ENCODE measurements at regions of chr14 and their contacts with region 1.

Region 1: DNA sequence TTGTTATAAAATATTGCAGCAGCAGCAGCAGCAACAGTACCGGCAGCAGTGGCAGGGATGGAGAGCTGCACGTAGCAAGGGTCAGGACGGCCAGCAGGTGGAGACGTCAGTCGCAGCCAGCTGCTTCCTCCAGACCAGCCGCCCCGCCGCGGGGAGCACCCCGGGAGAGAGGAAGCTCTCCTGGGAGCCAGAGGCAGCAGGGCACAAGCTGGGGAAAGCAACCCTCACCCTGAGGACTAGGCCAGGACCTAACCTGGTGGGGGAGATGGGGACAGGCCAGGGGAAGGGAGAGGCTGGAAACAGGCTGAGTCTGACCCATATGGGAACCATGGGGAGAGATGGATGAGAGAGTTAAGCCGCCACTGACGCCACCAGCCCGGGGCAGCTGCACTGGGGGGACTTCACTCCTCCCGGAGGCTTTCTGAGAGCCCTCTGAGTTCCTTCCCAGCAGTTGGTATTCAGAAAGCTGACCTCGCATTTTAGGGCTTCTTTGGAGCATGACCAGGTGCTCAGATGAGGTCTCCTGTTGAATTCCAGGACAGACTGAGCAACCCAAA is 56.3 kb downstream of the SPTB start:
- DNase-seq: peak; percentile 79 to 85
- H3K4me3 ChIP-seq: no peak overlapping the region
- H3K4me3 Mint-ChIP-seq: no peak overlapping the region
- H3K27ac Mint-ChIP-seq: no peak overlapping the region
- H3K4me1 ChIP-seq: no peaks in the 10 kb centered on the region
- H3K4me1 Mint-ChIP-seq: no peaks in the 10 kb centered on the region
- H3K27me3 ChIP-seq: no peaks in the 10 kb centered on the region
- H3K27me3 Mint-ChIP-seq: peaks cover 3% of the 10 kb centered on the region
- CTCF ChIP-seq: peak; percentile 72 to 90

Region 2: GRCh38 chr14:64745511-64746091 is 77.8 kb before region 1 on chr14:
- CTCF ChIA-PET with region 1: no interaction called
- POLR2A ChIA-PET with region 1: no interaction called
- intact Hi-C with region 1: no loop called
- DNase-seq: peak in 1 of 2 experiments; percentile 44
- H3K4me3 ChIP-seq: no peak overlapping the region
- H3K4me3 Mint-ChIP-seq: no peak overlapping the region
- H3K27ac Mint-ChIP-seq: peak overlapping the region; percentile 72
- H3K4me1 ChIP-seq: no peaks in the 10 kb centered on the region
- H3K4me1 Mint-ChIP-seq: no peaks in the 10 kb centered on the region
- H3K27me3 ChIP-seq: no peaks in the 10 kb centered on the region
- H3K27me3 Mint-ChIP-seq: no peaks in the 10 kb centered on the region
- CTCF ChIP-seq: peak in 1 of 2 experiments; percentile 39

Region 3: GRCh38 chr14:64841121-64841651 is 17.8 kb after region 1 on chr14:
- CTCF ChIA-PET with region 1: interaction called, 9 read pairs
- POLR2A ChIA-PET with region 1: no interaction called
- intact Hi-C with region 1: loop called (anchors 2 kb)
- DNase-seq: peak; percentile 73 to 77
- H3K4me3 ChIP-seq: no peak overlapping the region
- H3K4me3 Mint-ChIP-seq: no peak overlapping the region
- H3K27ac Mint-ChIP-seq: no peak overlapping the region
- H3K4me1 ChIP-seq: 0 out of 2 replicates have a peak, but pooled peaks cover 5% of the 10 kb centered on the region
- H3K4me1 Mint-ChIP-seq: peaks cover 7% of the 10 kb centered on the region
- H3K27me3 ChIP-seq: no peaks in the 10 kb centered on the region
- H3K27me3 Mint-ChIP-seq: peaks cover 6% of the 10 kb centered on the region
- CTCF ChIP-seq: peak; percentile 67 to 70

Region 4: DNA sequence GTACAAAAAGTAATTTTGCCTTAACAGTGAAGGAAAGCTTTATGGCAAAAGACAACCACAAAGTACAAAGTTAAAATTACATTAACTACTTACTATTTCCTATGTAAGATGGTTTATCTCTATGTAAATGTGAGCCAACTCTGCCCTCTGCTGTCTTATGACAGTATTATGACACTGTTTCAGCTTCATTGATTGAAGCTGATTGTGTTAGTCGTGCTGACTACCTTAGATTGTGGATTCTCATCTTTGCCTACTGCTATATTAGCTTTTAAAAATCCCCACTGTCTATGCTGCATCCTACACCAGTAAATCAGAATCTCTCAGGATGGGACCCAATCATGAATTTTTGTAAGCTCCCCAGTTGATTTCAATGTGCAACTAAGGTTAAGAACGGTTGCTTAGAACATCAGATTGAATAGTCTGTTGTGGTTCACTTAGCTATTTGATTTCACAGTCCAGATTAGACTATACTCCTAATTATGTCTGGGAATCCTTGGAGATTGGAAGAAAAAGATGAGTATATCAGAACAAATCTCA is 68.5 kb after region 1 on chr14:
- CTCF ChIA-PET with region 1: interaction called, 121 read pairs
- POLR2A ChIA-PET with region 1: interaction called, 4 read pairs
- intact Hi-C with region 1: loop called (anchors 5 kb)
- DNase-seq: peak in 1 of 2 experiments; percentile 60
- H3K4me3 ChIP-seq: no peak overlapping the region
- H3K4me3 Mint-ChIP-seq: no peak overlapping the region
- H3K27ac Mint-ChIP-seq: no peak overlapping the region
- H3K4me1 ChIP-seq: no peaks in the 10 kb centered on the region
- H3K4me1 Mint-ChIP-seq: no peaks in the 10 kb centered on the region
- H3K27me3 ChIP-seq: no peaks in the 10 kb centered on the region
- H3K27me3 Mint-ChIP-seq: peaks cover 9% of the 10 kb centered on the region
- CTCF ChIP-seq: peak; percentile 45 to 52

Region 5: DNA sequence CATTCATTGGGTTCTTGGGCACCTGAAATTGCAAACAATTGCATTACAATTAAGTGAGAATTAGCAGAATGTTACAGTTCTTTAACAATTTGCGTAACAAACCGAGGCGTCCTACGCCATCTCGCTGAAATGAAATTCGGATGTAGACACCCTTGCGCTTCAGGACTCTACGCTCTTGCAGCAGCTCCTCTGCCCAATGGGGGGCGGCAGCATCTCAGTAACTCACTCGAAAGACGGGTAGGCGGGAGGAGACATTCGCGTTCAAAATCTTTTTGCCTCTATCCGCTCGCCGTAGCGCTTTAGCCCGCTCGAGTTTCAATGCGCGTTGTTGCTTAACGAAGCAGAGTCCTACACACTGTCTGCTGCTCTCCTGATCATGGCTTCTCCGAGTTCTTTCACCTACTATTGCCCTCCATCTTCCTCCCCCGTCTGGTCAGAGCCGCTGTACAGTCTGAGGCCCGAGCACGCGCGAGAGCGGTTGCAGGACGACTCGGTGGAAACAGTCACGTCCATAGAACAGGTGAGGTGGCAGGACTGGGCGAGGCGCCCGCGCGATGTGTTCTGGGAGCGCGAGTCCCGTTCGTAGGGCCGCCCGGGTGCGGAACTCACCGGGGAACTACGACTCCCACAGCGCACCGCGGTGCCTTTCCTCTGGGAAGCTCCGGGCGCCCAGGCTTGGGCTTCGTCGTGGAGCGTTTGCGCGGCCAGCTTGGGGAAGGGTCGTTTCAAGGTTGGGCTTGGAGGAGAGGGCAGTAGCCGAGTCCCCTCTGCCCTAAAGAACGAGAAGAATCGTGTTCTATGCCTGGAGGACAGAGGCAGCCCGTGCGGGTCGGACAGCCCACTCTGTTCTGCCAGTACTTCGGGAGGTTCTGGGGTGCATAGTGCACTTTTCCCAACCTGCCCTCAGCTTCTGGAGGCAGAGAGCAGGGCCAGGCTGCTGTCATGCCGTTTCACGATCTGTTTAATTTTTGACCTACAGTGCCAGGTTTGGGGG is 163.5 kb after region 1 on chr14 and contains the start of gene FNTB:
- CTCF ChIA-PET with region 1: interaction called, 11 read pairs
- POLR2A ChIA-PET with region 1: no interaction called
- intact Hi-C with region 1: loop called (anchors 1 kb)
- DNase-seq: peak; percentile 95 to 96
- H3K4me3 ChIP-seq: peak within 1 kb of the TSS; percentile 80
- H3K4me3 Mint-ChIP-seq: peak within 1 kb of the TSS; percentile 98
- H3K27ac Mint-ChIP-seq: peak within 1 kb of the TSS; percentile 99
- H3K4me1 ChIP-seq: no peaks in the 10 kb centered on the region
- H3K4me1 Mint-ChIP-seq: peaks cover 20% of the 10 kb centered on the region
- H3K27me3 ChIP-seq: no peaks in the 10 kb centered on the region
- H3K27me3 Mint-ChIP-seq: no peaks in the 10 kb centered on the region
- CTCF ChIP-seq: peak; percentile 69 to 88
- total RNA-seq, gene FNTB: 20.6 and 21.2 TPM in 2 replicates